PC-9 (cell line): ENCODE measurements at regions of chr17 and their contacts with region 1.

Region 1: DNA sequence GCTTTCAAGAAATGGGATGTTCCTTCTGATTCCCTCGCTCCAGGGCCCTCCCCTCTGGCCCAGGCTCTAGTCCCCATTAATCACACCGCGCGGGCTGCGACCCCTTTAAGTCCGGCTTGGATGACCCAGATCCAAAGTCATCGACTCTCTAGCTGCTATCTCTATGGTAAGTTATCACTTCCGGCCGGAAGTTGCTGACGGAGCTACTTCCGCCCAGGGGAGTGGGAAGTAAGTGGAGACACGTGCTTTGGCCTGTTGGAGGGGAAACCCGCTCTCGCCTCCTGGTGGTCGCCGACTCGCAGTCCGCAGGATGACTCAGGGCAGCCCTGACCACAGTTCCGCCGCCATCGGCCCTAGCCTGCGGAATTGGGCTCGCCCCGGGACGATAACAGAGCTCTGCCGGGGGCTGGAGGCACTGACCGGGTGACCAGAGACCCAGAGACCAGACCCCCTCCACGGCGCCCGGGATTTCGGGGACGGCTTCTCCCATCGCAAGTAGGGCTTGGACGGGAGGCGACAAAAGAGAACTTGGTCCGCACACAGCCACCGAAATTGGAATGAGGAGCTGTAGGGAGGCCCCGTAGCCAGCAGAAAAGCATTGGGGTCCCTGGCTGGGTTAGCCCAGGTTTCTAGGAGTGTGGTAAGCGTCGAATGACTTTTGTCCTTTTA is 52.2 kb upstream of the SEC14L1 start:
- DNase-seq: peak; percentile 85 to 88
- H3K4me3 ChIP-seq: peak overlapping the region; percentile 81
- H3K27ac ChIP-seq: peak overlapping the region; percentile 72
- H3K4me1 ChIP-seq: peaks cover 4% of the 10 kb centered on the region; the same call in 1 of the 2 replicates
- H3K27me3 ChIP-seq: no peaks in the 10 kb centered on the region
- CTCF ChIP-seq: peak; percentile 50; the same call in 1 of the 2 replicates

Region 2: GRCh38 chr17:76726231-76726775 is 362.3 kb before region 1 on chr17 and contains the start of gene JMJD6:
- CTCF ChIA-PET with region 1: no interaction called
- POLR2A ChIA-PET with region 1: interaction called, 12 read pairs
- intact Hi-C with region 1: no loop called
- DNase-seq: peak; percentile 79 to 95
- H3K4me3 ChIP-seq: peak within 1 kb of the TSS; percentile 78
- H3K27ac ChIP-seq: peak within 1 kb of the TSS; percentile 81
- H3K4me1 ChIP-seq: peaks cover 12% of the 10 kb centered on the region
- H3K27me3 ChIP-seq: no peaks in the 10 kb centered on the region
- CTCF ChIP-seq: no peak
- total RNA-seq, gene JMJD6: 19.4 and 25.2 TPM in 2 replicates

Region 3: DNA sequence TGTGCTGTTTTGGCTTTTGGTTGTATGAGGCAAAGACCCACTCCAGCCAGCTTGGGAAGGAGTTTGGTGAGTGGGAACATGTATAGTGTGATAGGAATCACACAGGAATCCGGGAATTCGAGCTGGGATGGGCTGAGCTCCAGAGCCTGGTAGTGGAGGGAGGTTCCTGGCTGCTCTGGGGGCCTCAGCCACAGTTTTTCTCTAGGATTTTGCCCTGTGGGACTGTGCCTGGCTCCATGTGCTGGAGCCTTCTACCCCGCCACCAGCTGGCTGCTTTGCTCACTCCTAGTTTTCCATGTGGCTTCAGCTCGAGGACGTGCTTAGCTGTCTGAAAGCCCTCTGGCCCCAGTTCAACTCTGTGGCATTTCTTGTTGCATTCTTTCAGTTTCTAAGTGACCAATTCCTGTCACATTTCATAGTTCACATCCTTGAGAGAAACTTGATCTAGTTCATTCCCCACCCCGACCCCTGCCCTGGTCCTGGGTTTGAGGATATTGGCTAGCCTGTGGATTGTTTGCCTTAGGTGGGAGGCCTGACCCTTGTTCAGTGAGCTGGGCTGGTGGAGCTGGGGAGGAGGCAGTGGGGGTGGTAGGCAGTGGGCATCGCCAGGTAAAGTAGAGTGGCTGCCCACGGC is 57.1 kb after region 1 on chr17:
- CTCF ChIA-PET with region 1: interaction called, 3 read pairs
- POLR2A ChIA-PET with region 1: interaction called, 9 read pairs
- intact Hi-C with region 1: loop called (anchors 2 kb)
- DNase-seq: peak; percentile 56 to 76
- H3K4me3 ChIP-seq: peak overlapping the region; percentile 23; the same call in 1 of the 2 replicates
- H3K27ac ChIP-seq: peak overlapping the region; percentile 25; the same call in 1 of the 2 replicates
- H3K4me1 ChIP-seq: peaks cover 37% of the 10 kb centered on the region
- H3K27me3 ChIP-seq: no peaks in the 10 kb centered on the region
- CTCF ChIP-seq: no peak

Region 4: DNA sequence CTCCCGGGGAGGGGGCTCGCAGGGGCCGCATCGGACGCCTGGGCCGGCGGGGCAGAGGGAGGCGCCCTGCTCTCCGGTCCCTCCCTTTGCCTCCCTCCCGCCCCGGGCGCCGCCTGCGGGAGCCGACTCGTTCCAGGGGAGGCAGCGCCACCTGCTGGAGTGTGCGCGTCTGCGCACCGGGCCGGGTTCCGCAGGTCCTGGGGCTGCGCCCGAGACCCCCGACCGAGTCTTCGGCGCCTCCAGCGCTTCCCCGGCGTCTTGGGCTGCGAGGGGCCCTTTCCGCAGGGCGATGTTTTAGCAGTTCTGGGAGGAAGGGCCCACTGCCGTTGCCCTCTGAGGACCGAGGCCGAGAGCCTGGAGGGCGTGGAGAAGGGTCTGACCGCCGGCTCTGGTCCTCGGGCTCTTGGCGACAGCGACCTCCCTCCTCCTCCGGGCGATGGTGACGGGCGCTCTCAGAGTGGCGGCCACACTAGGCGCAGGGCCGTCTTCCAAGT is 158.5 kb after region 1 on chr17:
- CTCF ChIA-PET with region 1: no interaction called
- POLR2A ChIA-PET with region 1: no interaction called
- intact Hi-C with region 1: loop called (anchors 2 kb)
- DNase-seq: peak in 1 of 2 experiments; percentile 77
- H3K4me3 ChIP-seq: peak overlapping the region; percentile 49; the same call in 1 of the 2 replicates
- H3K27ac ChIP-seq: no peak overlapping the region
- H3K4me1 ChIP-seq: no peaks in the 10 kb centered on the region; the same call in 1 of the 2 replicates
- H3K27me3 ChIP-seq: no peaks in the 10 kb centered on the region
- CTCF ChIP-seq: peak; percentile 88

Region 5: DNA sequence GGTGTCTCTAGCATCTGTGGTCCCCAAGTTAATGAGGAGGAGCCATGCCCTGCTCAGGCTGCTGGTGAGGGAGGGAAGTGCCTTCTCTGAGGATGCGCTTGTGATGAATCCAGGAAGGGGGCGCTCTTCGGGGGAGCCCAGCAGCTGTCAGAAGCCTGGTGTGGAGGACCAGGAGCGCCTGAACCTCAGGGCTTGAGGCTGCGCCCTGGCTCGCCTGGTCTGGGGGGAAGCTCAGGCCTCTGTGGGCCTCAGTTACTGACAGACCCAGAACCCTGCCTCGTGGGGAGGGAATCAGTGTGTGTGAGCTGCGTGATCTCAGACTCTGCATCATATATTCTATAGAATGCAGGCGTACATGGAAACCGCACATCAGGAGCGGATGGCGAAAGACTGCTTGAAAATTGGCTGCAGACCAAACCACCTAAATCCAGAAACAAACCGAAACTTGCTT is 178.3 kb after region 1 on chr17:
- CTCF ChIA-PET with region 1: no interaction called
- POLR2A ChIA-PET with region 1: no interaction called
- intact Hi-C with region 1: no loop called
- DNase-seq: no peak
- H3K4me3 ChIP-seq: no peak overlapping the region
- H3K27ac ChIP-seq: no peak overlapping the region
- H3K4me1 ChIP-seq: peaks cover 26% of the 10 kb centered on the region
- H3K27me3 ChIP-seq: no peaks in the 10 kb centered on the region
- CTCF ChIP-seq: no peak

Region 6: DNA sequence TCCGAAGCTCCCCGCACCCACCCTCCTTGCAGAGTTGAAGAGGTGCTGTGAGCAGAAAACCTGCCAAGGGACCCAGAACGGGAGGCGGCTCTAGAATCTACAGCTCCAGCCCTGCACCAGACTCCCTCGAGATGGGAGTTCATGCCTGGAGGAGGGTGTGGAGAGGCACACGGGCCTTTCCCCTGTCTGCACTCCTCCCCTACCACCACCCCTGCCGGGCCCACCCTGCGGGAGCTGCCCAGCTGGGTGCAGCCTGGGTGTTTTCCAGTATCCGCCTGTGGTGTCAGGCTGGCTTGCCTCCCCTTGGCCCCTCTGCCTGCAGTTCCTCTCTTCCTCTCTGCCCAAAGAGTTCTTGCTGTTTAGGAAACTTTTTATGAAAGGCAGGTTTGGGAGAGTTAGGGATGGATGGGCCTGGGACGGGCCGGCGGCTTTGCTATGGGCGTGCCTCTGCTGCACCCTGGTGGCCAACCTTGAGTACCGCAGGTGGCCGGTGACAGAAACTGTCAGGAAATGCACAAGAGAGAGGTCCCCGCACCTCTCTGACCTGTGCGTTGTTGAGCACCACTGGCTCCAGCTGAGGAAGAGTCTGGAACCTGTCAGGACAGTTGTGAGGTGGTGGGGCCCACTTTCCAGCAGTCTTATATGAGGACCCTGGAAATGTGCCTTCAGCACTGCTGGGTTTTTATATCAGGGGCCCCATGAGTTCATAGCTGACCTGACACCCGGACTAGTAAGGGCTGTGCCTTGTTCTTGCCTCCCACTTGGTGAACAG is 406.3 kb after region 1 on chr17:
- CTCF ChIA-PET with region 1: no interaction called
- POLR2A ChIA-PET with region 1: no interaction called
- intact Hi-C with region 1: loop called (anchors 1 kb)
- DNase-seq: peak; percentile 44 to 72
- H3K4me3 ChIP-seq: no peak overlapping the region
- H3K27ac ChIP-seq: no peak overlapping the region
- H3K4me1 ChIP-seq: no peaks in the 10 kb centered on the region
- H3K27me3 ChIP-seq: no peaks in the 10 kb centered on the region
- CTCF ChIP-seq: peak; percentile 94